Right ventricle myocardium inferior (tissue), 1 donor: ENCODE measurements at regions of chr16 and their contacts with region 1.

Region 1: GRCh38 chr16:49766225-49766624 is 89.7 kb downstream of the ZNF423 start:
- DNase-seq: no peak
- ATAC-seq: peak; percentile 44

Region 2: DNA sequence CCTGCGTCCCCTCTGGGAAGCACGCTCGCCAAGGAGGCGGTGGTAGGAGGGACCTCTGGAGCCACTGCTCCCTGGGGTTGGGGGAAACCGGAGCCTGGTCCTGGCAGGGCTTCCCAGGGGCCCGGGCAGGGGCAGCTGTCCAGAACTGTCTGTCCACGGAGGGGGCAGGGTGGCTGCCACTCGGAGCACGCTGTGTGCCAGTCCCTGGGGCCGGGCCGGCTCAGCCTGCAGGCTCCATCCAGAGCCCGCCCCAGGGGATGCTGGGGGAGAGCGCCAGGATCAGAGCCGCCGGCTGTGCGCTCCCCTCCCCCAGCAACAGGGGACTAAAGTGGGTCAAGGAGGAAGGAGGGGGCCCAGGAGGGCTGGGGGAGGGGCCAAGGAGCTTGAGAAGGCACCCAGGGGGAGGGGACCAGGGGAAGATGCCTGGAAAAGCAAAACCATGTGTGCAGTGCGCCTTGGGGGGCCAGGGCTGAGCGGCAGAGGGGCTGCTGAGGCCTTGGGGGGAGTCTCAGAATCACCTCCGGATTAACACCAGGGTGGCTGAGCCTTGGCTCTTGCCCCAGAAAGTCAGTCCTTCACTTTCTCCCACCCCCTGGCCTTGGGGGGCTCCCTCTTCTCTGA is 68.4 kb after region 1 on chr16:
- intact Hi-C with region 1: loop called (anchors 5 kb)
- DNase-seq: peak; percentile 83
- ATAC-seq: peak; percentile 52